Ascending aorta (tissue), 2 donors: ENCODE measurements at regions of chr18 and their contacts with region 1.

Region 1: DNA sequence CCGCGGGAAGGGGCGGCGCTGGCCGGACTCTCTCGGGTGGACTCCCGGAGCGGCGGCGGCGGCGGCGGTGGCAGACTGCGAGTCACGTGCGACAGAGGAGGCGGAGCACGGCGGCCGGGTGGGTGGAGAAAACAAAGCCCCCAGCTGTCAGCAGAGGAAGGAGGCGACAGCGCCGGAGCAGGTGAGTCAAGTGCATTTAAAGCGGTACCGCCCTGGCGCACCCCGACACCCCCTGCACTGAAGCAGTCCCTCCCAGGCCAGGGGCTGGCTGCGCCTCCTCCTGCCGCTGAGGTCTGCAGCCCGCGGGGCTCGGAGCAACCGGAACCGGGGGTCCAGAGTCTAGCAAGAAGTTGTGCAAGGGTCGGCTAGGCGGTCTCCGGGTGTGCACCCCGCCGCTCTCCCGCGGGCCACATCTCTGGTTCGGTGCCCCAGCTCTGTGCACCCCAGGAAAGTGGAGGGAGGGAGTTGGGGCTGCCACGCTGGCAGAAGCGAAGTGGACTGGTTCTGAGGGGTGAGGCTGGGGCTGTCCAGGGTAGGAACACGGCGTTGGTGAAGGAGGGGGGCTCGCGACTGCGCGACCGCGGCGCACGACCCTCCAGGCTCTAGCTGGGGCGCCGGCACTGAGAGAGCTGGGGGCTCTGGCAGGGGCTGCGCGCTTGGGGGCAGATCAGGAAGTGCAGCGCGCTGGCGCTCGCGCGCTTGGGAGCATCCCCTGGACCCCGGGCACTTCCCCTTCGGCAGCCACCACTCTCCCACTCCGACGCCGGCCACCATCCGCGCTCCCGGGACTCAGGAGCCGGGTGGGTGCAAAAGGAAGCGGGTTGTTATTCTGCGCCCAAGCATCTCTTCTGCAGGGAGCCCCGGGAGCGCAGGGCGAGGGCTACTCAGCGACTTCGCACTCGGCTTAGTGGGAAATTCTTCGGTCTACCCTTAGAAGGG is 64.0 kb upstream of the MAPRE2 start:
- DNase-seq: peak; percentile 27 to 90
- H3K4me3 ChIP-seq: peak overlapping the region; percentile 81 to 94
- H3K27ac ChIP-seq: peak overlapping the region; percentile 58 to 71
- H3K4me1 ChIP-seq: peaks cover 0 to 5% of the 10 kb centered on the region in 2 donors
- H3K27me3 ChIP-seq: no peaks in the 10 kb centered on the region
- CTCF ChIP-seq: no peak

Region 2: DNA sequence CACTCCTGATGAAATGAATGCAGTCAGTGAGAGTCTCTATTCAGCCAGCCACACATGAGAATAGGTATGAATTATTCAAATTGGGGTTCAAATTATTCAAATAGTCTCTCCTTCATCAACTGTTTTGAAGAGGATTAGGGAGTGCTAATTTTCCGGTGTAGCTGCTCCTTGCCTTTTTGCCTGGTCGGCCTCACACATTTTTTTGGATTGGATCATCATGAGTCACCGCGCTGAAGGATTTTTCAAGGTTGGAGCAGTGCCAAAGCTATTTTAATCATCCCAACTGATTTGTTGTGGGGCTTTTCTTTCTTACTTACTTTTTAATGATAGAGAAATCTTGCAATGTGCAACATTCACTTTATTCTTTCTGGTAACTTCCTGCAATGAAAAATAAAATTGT is 269.5 kb before region 1 on chr18:
- intact Hi-C with region 1: loop called (anchors 5 kb)
- DNase-seq: peak in 1 of 2 donors; percentile 86
- H3K4me3 ChIP-seq: peak overlapping the region; percentile 18 to 25
- H3K27ac ChIP-seq: peak overlapping the region; percentile 62 to 63
- H3K4me1 ChIP-seq: peaks cover 9 to 28% of the 10 kb centered on the region in 2 donors
- H3K27me3 ChIP-seq: no peaks in the 10 kb centered on the region
- CTCF ChIP-seq: no peak

Region 3: DNA sequence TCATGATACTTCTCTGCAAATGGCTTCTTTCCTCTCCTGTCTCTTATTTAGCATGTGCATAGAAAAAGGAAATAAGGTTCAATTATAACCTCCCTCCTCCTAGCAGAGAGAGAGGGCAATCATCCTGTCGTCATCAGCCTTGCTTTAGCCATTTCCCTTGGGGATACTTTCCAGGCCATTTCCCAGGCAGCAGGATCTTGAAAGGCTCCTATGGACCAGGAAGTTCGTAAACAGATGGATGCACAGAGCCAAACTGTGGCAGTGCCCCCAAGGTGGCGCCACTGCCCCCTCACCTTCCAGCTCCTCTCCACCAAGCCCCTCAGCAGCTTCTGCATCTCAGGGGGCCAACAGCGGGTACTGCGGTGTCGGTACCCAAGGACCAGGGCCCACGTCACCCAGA is 109.6 kb before region 1 on chr18:
- intact Hi-C with region 1: loop called (anchors 5 kb)
- DNase-seq: peak in 1 of 2 donors; percentile 74
- H3K4me3 ChIP-seq: peak overlapping the region in 1 of 2 donors; percentile 15
- H3K27ac ChIP-seq: peak overlapping the region; percentile 61 to 79
- H3K4me1 ChIP-seq: peaks cover 7 to 18% of the 10 kb centered on the region in 2 donors
- H3K27me3 ChIP-seq: no peaks in the 10 kb centered on the region
- CTCF ChIP-seq: peak in 2 of 3 experiments; percentile 14 to 30

Region 4: DNA sequence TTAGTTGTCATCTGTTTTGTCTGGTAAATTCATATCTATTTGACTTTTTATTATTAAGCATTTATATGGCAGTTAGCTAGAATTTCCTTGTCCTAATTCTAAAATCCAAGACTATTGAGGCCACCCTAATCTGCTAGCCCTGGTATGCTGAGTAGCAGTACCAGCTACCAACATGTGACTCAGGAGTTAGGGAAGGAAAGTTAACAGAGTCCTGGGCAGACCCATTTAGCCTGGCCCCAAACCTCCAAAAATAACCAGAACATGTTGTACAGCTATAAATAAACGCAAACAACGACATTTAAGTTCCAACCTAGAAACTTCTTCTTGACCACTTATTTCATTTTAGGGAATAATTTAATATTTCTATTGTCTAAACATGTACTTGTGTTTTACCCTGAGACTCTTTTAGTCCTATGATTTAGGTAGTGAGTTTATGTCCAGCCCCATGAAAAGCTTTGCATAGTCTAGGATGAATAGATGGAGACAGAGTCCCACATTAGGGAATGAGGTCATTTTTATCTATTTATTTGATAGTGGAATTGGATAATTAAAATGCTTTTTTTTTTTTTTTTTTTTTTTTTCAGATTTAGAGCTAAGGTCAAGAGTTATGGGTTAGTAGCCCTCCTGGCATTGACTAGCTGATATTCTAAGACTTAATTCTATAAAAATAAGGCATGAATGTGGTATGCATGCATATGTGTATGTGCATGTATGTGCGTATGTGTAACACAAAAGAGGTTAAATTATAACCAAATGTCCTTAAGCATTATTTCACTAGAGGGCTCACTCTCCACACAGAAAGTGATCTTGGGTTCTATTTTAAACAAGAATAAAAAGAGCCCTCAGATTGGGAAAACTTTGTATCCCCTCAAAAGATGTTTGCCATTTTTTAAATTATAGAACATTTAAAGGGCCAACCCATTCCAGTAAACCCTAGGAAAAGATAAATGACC is 96.0 kb before region 1 on chr18:
- intact Hi-C with region 1: loop called (anchors 2 kb)
- DNase-seq: peak in 1 of 2 donors; percentile 72
- H3K4me3 ChIP-seq: no peak overlapping the region
- H3K27ac ChIP-seq: peak overlapping the region; percentile 86 to 88
- H3K4me1 ChIP-seq: peaks cover 4 to 45% of the 10 kb centered on the region in 2 donors
- H3K27me3 ChIP-seq: no peaks in the 10 kb centered on the region
- CTCF ChIP-seq: peak in 1 of 3 experiments; percentile 27

Region 5: DNA sequence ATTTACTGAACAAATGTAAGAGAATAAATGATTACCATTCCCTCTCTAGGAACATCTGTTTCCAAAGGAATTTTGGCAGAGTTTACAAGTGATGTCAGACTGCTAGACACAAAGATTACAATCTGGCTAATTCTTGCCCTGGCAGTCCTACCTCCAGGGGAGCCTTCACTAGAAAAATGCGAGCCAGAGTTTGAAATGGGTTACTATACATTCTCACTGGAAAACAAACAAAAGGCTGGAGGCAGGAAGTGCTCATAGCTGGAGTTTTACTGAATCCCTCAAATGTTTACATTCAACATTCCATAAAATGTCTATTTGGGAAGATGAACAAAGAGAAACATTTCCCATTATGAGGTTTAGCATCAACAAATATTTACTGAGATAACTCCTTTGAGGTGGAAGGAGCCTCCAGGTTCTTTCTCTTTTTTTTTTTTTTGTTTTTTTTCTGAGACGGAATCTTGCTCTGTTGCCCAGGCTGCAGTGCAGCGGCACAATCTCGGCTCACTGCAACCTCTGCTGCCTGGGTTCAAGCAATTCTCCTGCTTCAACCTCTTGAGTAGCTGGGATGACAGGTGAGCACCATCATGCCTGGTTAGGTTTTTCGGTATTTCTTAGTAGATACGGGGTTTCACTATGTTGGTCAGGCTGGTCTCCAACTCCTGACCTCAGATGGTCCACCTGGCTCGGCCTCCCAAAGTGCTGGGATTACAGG is 65.0 kb before region 1 on chr18:
- intact Hi-C with region 1: loop called (anchors 1 kb)
- DNase-seq: no peak
- H3K4me3 ChIP-seq: no peak overlapping the region
- H3K27ac ChIP-seq: no peak overlapping the region
- H3K4me1 ChIP-seq: peaks cover 0 to 9% of the 10 kb centered on the region in 2 donors
- H3K27me3 ChIP-seq: no peaks in the 10 kb centered on the region
- CTCF ChIP-seq: no peak

Region 6: GRCh38 chr18:35040988-35041814 is 64.0 kb after region 1 on chr18 and contains the start of gene MAPRE2:
- intact Hi-C with region 1: loop called (anchors 2 kb)
- DNase-seq: peak; percentile 97 to 100
- H3K4me3 ChIP-seq: peak within 1 kb of the TSS; percentile 79 to 82
- H3K27ac ChIP-seq: peak within 1 kb of the TSS; percentile 76 to 82
- H3K4me1 ChIP-seq: peaks cover 0 to 27% of the 10 kb centered on the region in 2 donors
- H3K27me3 ChIP-seq: no peaks in the 10 kb centered on the region
- CTCF ChIP-seq: no peak
- total RNA-seq, gene MAPRE2: 22.4 TPM

Region 7: DNA sequence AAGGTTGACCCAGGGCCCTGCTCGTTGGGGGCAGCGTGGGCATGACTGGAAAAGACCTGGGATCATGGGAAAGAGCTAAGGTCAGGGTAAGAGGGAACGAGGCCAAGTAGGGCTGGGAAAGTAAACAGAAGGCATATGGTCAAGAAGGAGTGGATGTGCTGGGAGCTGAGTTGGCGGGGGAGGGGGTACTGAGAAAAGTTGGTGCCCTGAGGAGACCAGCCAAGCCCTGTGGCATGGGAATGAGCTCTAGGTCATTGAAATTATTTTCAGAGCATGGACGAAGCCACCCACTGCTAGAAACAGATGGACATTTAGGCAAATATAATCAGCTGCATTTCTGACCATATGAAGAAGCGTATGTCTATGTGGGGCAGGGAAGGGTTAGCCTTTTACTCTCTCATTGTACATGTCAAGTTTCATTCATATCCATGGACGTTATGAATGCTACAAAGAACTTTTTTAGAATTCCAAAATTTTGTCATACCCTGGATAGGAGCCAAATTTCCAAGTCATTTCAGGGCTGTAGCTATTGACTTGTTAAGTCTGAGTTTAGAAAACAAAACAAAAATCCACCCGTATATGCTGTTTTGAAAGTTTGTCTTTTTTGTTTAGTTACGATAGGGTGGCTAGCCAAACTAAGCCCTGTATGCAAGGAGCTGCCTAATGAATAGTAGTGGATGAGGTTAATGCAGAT is 83.1 kb after region 1 on chr18:
- intact Hi-C with region 1: no loop called
- DNase-seq: no peak
- H3K4me3 ChIP-seq: no peak overlapping the region
- H3K27ac ChIP-seq: no peak overlapping the region
- H3K4me1 ChIP-seq: peaks cover 0 to 7% of the 10 kb centered on the region in 2 donors
- H3K27me3 ChIP-seq: no peaks in the 10 kb centered on the region
- CTCF ChIP-seq: no peak